B cell (primary cell): ENCODE measurements at regions of chr19 and their contacts with region 1.

Region 1: DNA sequence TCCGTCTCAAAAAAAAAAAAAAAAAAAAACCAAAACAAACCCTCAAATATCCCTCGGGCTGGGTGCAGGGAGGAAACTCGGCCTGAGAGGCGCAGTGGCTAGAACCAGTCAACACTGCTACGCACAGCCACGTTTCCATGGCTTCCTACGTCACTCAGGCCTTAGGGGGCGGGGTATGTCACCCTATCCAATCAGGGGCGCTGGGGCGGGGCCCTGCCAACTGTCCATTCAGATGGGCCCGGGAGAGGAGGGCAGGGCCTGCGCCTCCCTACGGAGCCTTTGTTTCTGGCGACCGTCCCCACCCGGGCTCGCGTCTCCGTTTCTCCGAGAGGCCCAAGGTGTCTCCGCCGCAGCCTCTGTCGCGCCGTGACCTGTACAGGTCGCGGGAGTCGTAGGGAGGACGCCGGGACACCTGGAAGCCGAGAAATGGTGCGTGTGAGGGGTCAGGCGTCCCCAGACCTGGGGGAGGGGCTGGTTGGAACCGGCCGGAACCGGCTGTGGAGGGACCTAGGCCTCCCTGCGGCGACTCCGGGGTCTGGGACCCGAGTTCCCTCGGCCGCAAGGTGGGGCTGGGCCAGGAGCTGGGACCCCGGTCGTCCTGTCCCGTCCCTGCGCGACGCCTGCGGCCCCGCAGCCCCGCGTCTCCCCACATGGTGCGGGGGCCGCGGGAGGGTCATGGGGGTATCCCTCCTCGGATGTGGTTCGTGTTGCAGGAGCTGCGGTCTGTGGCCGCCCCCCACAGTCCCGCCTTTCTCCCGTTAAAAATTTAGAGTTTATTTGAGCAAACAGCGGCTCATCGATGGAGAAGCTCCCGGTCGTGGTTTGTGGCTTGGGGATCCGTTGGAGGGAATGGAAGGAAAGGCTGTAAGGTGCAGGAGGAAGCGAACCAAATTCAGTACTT is at the start of gene ZNF627:
- DNase-seq: peak; percentile 98
- ATAC-seq: peak; percentile 99
- H3K4me3 ChIP-seq: peak within 1 kb of the TSS; percentile 59 to 95 (median 85)
- H3K4me3 Mint-ChIP-seq: peak within 1 kb of the TSS; percentile 96
- H3K27ac ChIP-seq: peak within 1 kb of the TSS; percentile 87 to 88
- H3K27ac Mint-ChIP-seq: peak within 1 kb of the TSS; percentile 94
- H3K4me1 ChIP-seq: peaks cover 14 to 27% of the 10 kb centered on the region in 2 donors
- H3K4me1 Mint-ChIP-seq: peaks cover 34% of the 10 kb centered on the region
- H3K27me3 ChIP-seq: no peaks in the 10 kb centered on the region
- H3K27me3 Mint-ChIP-seq: no peaks in the 10 kb centered on the region
- CTCF ChIP-seq: no peak
- total RNA-seq, gene ZNF627: 24.7 and 26.2 TPM in 2 replicates

Region 2: GRCh38 chr19:11418549-11419506 is 178.6 kb before region 1 on chr19 and contains the start of gene RGL3:
- CTCF ChIA-PET with region 1: no interaction called
- POLR2A ChIA-PET with region 1: no interaction called
- intact Hi-C with region 1: no loop called
- DNase-seq: peak; percentile 65
- ATAC-seq: no peak
- H3K4me3 ChIP-seq: peak within 1 kb of the TSS in 4 of 5 experiments; percentile 41 to 49 (median 44)
- H3K4me3 Mint-ChIP-seq: peak within 1 kb of the TSS; percentile 81
- H3K27ac ChIP-seq: no peak within 1 kb of the TSS
- H3K27ac Mint-ChIP-seq: no peak within 1 kb of the TSS
- H3K4me1 ChIP-seq: peaks cover 54 to 58% of the 10 kb centered on the region in 2 donors
- H3K4me1 Mint-ChIP-seq: peaks cover 50% of the 10 kb centered on the region
- H3K27me3 ChIP-seq: peaks cover 0 to 50% (median 24%) of the 10 kb centered on the region in 4 experiments
- H3K27me3 Mint-ChIP-seq: peaks cover 18% of the 10 kb centered on the region
- CTCF ChIP-seq: no peak
- total RNA-seq, gene RGL3: 0.54 and 0.78 TPM in 2 replicates

Region 3: DNA sequence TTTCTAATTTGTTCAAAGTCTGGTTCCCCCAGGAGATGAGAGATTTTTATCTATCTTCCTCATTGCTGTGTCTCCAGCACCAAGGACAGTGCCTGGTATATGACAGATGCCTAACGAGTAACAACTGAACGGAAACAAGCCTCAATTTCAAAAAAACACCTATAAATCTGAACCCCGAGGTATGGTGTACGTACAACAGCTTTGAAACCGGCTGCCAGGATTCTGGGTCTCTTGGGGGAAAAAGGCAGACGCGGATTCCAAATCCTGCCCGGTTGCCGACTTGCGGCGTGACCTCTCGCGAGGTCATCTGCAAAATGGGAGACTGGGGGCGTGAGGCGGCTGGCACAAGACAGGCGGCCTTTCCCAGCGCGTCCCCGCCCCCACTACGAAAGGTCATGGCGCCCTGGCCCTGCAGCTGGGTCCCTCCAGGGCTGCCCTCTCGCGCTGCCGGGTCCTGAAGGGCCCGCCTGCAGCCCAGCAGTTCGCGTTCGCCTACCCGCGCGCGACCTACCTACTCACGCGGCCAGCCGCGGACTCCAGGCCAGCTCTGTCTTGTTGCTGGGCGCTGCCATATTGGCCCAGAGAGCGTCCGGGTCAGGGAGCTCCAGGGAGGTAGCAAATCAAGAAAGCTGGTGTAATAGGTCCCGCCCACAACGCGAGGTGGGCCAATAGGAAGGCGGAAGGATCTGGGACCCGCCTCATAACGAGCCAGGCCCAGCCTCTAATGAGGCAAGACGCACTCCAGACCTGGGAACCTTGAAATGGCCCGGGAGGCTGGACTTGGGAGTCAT is 68.7 kb before region 1 on chr19 and contains the start of gene ECSIT:
- CTCF ChIA-PET with region 1: no interaction called
- POLR2A ChIA-PET with region 1: interaction called, 3 read pairs
- intact Hi-C with region 1: loop called (anchors 2 kb)
- DNase-seq: peak; percentile 95
- ATAC-seq: peak; percentile 99
- H3K4me3 ChIP-seq: peak within 1 kb of the TSS; percentile 45 to 83 (median 79)
- H3K4me3 Mint-ChIP-seq: peak within 1 kb of the TSS; percentile 98
- H3K27ac ChIP-seq: peak within 1 kb of the TSS; percentile 58 to 79
- H3K27ac Mint-ChIP-seq: peak within 1 kb of the TSS; percentile 95
- H3K4me1 ChIP-seq: peaks cover 7 to 19% of the 10 kb centered on the region in 2 donors
- H3K4me1 Mint-ChIP-seq: peaks cover 16% of the 10 kb centered on the region
- H3K27me3 ChIP-seq: no peaks in the 10 kb centered on the region
- H3K27me3 Mint-ChIP-seq: no peaks in the 10 kb centered on the region
- CTCF ChIP-seq: no peak
- total RNA-seq, gene ECSIT: 45.6 and 56.7 TPM in 2 replicates

Region 4: DNA sequence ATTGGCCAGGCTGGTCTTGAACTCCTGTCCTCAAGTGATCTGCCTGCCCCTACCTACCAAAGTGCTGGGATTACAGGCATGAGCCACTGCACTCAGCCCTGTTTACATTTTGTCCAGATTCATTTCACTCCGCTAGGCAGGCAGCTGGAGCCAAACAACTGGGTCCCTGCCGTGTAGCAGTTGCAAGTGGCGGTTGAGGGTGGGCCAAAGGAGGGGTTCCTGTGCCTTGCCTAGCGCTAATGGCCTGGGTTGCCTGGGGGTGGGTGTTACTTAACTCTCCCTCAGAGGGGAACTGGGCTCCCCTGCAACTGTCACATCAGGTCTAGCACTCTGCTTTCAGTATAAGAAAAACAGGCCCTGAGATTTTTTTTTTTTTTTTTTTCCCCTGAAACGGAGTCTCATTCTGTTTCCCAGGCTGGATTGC is 27.4 kb before region 1 on chr19:
- CTCF ChIA-PET with region 1: interaction called, 8 read pairs
- POLR2A ChIA-PET with region 1: interaction called, 5 read pairs
- intact Hi-C with region 1: loop called (anchors 1 kb)
- DNase-seq: peak; percentile 45
- ATAC-seq: no peak
- H3K4me3 ChIP-seq: no peak overlapping the region
- H3K4me3 Mint-ChIP-seq: no peak overlapping the region
- H3K27ac ChIP-seq: peak overlapping the region in 1 of 2 donors; percentile 5
- H3K27ac Mint-ChIP-seq: peak overlapping the region; percentile 85
- H3K4me1 ChIP-seq: peaks cover 47 to 75% of the 10 kb centered on the region in 2 donors
- H3K4me1 Mint-ChIP-seq: peaks cover 49% of the 10 kb centered on the region
- H3K27me3 ChIP-seq: no peaks in the 10 kb centered on the region
- H3K27me3 Mint-ChIP-seq: no peaks in the 10 kb centered on the region
- CTCF ChIP-seq: no peak

Region 5: GRCh38 chr19:11639602-11640471 is 42.4 kb after region 1 on chr19:
- CTCF ChIA-PET with region 1: no interaction called
- POLR2A ChIA-PET with region 1: no interaction called
- intact Hi-C with region 1: loop called (anchors 1 kb)
- DNase-seq: peak; percentile 90
- ATAC-seq: peak; percentile 99
- H3K4me3 ChIP-seq: peak overlapping the region in 4 of 5 experiments; percentile 58 to 69 (median 61)
- H3K4me3 Mint-ChIP-seq: peak overlapping the region; percentile 82
- H3K27ac ChIP-seq: no peak overlapping the region
- H3K27ac Mint-ChIP-seq: no peak overlapping the region
- H3K4me1 ChIP-seq: peaks cover 5 to 11% of the 10 kb centered on the region in 2 donors
- H3K4me1 Mint-ChIP-seq: peaks cover 7% of the 10 kb centered on the region
- H3K27me3 ChIP-seq: peaks cover 0 to 10% (median 3%) of the 10 kb centered on the region in 4 experiments
- H3K27me3 Mint-ChIP-seq: peaks cover 14% of the 10 kb centered on the region
- CTCF ChIP-seq: no peak

Region 6: DNA sequence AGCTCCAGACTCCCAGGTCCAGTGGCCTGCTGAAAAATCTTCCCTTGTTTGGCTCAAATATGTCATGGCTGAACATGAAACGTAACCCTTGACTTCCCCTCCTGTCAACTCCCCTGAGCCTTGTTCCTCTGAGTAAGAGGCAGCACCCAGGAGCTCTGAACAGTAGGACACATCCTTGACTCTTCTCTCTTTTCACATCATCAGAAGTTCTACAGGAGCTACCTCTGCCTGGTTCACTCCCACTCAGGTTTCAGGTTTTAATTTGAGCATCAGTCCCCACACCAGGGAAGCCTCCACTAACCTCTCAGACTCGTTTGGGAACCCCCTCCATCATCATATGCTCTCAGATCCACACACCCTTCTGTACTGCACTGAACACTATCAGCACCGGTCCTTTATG is 111.0 kb after region 1 on chr19:
- CTCF ChIA-PET with region 1: no interaction called
- POLR2A ChIA-PET with region 1: no interaction called
- intact Hi-C with region 1: no loop called
- DNase-seq: no peak
- ATAC-seq: no peak
- H3K4me3 ChIP-seq: no peak overlapping the region
- H3K4me3 Mint-ChIP-seq: no peak overlapping the region
- H3K27ac ChIP-seq: no peak overlapping the region
- H3K27ac Mint-ChIP-seq: no peak overlapping the region
- H3K4me1 ChIP-seq: no peaks in the 10 kb centered on the region
- H3K4me1 Mint-ChIP-seq: no peaks in the 10 kb centered on the region
- H3K27me3 ChIP-seq: no peaks in the 10 kb centered on the region
- H3K27me3 Mint-ChIP-seq: peaks cover 11% of the 10 kb centered on the region
- CTCF ChIP-seq: no peak